ENCODE measurements at regions of chr18 and their contacts with region 1.

Region 1: GRCh38 chr18:9147440-9148202 is 11.0 kb downstream of the ANKRD12 start:
- DNase-seq: peak; percentile 48
- ATAC-seq: peak; percentile 89
- H3K4me3 ChIP-seq: no peak overlapping the region
- H3K27ac ChIP-seq: no peak overlapping the region
- H3K4me1 ChIP-seq: peaks cover 0 to 5% of the 10 kb centered on the region in 2 experiments; a peak in 2 of 4 replicates
- H3K27me3 ChIP-seq: no peaks in the 10 kb centered on the region
- CTCF ChIP-seq: peak; percentile 63 to 71 (median 69); a peak in 5 of 6 replicates
- POLR2A ChIP-seq: no peak
- RAD21 ChIP-seq: peak; percentile 85

Region 2: GRCh38 chr18:8750954-8751415 is 396.6 kb before region 1 on chr18:
- CTCF ChIA-PET with region 1: no interaction called
- POLR2A ChIA-PET with region 1: no interaction called
- RAD21 ChIA-PET with region 1: no interaction called
- intact Hi-C with region 1: no loop called
- DNase-seq: no peak
- ATAC-seq: no peak
- H3K4me3 ChIP-seq: no peak overlapping the region
- H3K27ac ChIP-seq: no peak overlapping the region
- H3K4me1 ChIP-seq: no peaks in the 10 kb centered on the region
- H3K27me3 ChIP-seq: no peaks in the 10 kb centered on the region
- CTCF ChIP-seq: no peak
- POLR2A ChIP-seq: no peak
- RAD21 ChIP-seq: no peak

Region 3: GRCh38 chr18:8988261-8988871 is 159.3 kb before region 1 on chr18:
- CTCF ChIA-PET with region 1: interaction called, 3 read pairs
- POLR2A ChIA-PET with region 1: no interaction called
- RAD21 ChIA-PET with region 1: no interaction called
- intact Hi-C with region 1: loop called (anchors 10 kb)
- DNase-seq: peak; percentile 52
- ATAC-seq: peak; percentile 96
- H3K4me3 ChIP-seq: no peak overlapping the region
- H3K27ac ChIP-seq: no peak overlapping the region
- H3K4me1 ChIP-seq: peaks cover 0 to 23% of the 10 kb centered on the region in 2 experiments; a peak in 3 of 4 replicates
- H3K27me3 ChIP-seq: no peaks in the 10 kb centered on the region
- CTCF ChIP-seq: peak; percentile 62 to 86 (median 81); a peak in 5 of 6 replicates
- POLR2A ChIP-seq: no peak
- RAD21 ChIP-seq: peak; percentile 84

Region 4: GRCh38 chr18:9069601-9070000 is 78.0 kb before region 1 on chr18:
- CTCF ChIA-PET with region 1: interaction called, 7 read pairs
- POLR2A ChIA-PET with region 1: no interaction called
- RAD21 ChIA-PET with region 1: no interaction called
- intact Hi-C with region 1: loop called (anchors 1 kb)
- DNase-seq: no peak
- ATAC-seq: no peak
- H3K4me3 ChIP-seq: no peak overlapping the region
- H3K27ac ChIP-seq: no peak overlapping the region
- H3K4me1 ChIP-seq: peaks cover 2 to 23% of the 10 kb centered on the region in 2 experiments; a peak in 3 of 4 replicates
- H3K27me3 ChIP-seq: no peaks in the 10 kb centered on the region
- CTCF ChIP-seq: no peak
- POLR2A ChIP-seq: no peak
- RAD21 ChIP-seq: no peak

Measured in HCT116 (cell line).